Left colon (tissue), 2 donors: ENCODE measurements at regions of chr1 and their contacts with region 1.

Region 1: GRCh38 chr1:53381790-53382401 is 54.0 kb upstream of the LRP8 start:
- DNase-seq: no peak
- ATAC-seq: no peak

Region 2: DNA sequence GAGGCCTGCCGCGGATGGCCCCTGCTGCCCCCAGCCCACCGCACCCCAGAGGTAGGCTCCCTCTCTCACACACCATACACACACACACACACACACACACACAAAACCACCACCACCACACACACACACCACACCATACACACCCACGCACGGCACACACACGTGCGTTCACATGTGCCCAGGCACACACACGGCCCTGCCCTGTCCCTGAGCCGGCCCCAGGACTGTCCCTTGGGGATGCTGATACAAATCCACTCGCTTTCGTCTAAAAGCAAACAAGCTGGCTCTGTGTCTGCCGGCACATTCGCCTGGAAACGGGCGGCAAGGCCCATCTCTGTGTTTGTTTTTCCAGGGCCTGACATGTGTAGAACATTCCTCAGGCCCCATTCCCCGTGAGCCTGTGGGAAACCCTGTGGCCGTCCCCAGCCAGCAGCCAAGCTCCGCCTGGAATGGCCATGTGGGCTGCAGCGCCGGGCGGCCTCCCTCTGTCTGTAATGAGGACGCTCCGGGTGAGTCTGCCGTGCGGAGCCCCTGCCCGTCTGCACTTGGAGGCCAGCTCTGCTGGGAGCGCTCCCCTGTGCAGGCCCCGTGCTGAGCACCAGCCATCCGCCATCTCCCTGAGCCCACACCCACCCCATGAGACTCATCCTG is 144.7 kb after region 1 on chr1:
- intact Hi-C with region 1: no loop called
- DNase-seq: peak in 1 of 2 donors; percentile 25
- ATAC-seq: no peak

Region 3: DNA sequence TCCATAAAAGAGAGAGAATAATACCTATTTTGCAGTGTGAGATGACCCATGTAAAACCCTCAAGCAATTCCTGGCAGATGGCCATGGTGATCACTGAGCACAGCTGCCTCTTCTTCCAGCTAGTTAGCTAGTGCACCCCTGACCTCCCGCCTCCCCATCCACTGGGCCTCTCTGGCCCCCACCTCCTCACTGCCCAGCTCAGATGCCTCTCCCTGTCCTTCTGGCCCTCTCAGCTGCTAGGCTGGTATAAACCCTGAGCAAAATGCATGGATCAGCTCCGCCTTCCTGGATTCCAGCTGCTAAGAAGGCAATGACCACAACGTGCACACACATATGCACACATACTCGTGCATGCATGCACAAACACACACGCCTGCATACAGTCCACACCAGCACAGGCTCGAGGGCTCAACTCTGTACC is 194.5 kb after region 1 on chr1:
- intact Hi-C with region 1: loop called in 1 of 2 experiments (anchors 5 kb)
- DNase-seq: peak in 1 of 2 donors; percentile 14
- ATAC-seq: no peak